ENCODE measurements at regions of chr21 and their contacts with region 1.

Region 1: DNA sequence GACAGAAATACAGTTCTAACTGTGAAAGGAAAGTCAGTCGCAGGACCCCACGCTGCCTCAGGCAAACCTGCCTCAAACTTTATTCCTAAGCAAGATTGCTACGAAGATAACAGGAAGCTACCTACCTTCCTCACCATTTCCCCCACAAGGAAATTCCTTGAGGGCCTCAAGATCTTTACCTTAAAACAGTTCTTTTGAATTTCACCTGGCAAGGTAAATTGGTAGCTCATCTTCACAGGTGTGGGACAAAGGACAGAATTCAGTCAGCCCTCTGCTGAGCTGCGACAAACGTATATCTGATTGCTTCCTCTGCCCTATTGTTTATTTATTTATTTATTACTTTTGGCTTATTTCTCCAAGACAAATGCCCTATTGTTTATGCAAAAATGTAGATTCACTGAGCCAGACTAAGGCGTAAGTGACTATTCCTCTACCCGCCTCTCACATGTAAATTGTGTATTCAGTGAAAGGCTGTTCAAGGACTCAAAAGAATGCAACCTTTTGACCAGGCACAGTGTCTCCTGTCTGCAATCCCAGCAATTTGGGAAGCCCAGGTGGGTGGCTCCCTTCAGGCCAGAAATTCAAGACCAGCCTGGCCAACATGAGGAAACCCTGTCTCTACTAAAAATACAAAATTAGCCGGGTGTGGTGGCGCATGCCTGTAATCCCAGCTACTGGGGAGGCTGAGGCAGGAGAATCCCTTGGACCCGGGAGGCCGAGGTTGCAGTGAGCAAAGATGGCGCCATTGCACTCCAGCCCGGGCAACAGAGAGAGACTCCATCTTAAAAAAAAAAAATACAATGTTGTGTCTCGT is 17.3 kb upstream of the PKNOX1 start:
- DNase-seq: no peak
- ATAC-seq: peak; percentile 84 to 100
- H3K4me3 ChIP-seq: no peak overlapping the region
- H3K27ac ChIP-seq: no peak overlapping the region
- H3K4me1 ChIP-seq: no peaks in the 10 kb centered on the region
- H3K27me3 ChIP-seq: no peaks in the 10 kb centered on the region

Region 2: DNA sequence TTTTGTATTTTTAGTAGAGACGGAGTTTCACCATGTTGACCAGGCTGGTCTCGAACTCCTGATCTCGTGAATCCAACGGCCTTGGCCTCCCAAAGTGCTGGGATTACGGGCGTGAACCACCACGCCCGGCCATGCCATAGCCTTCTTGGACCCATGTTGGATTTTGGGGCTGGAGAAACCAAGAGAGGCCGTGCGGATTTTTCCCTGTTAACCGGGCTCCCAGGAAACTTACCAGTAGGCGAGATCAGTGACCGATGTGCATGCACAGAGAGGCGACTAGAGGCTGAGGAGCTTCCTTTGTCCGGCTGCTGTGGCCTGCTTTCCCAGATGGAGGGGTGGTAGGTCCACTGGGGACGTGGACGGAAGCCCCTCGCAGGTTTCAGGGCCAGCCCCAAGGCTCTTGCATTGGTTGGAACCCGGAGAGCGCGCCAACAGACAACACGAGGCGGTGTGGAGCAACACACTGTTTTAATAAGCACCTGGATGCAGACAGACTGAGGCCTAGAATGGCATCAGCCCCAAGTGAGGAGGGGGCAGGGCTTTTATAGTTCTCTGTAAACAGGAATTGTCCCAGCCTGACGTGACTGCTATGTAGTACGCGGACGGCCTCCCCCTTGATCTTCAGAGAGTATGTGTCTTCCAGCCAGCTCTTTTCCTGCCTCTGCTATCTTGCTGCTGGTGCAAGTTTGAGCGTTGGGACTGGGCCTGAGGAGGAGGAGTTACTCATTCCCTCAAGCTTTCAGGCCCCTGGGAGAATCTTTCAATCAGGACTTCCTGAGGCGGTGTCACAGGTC is 31.7 kb before region 1 on chr21 and contains the start of gene ERVH48-1:
- intact Hi-C with region 1: no loop called
- DNase-seq: no peak
- ATAC-seq: peak in 1 of 2 donors; percentile 19
- H3K4me3 ChIP-seq: no peak within 1 kb of the TSS
- H3K27ac ChIP-seq: no peak within 1 kb of the TSS
- H3K4me1 ChIP-seq: no peaks in the 10 kb centered on the region
- H3K27me3 ChIP-seq: no peaks in the 10 kb centered on the region
- total RNA-seq, gene ERVH48-1: not detected

Region 3: DNA sequence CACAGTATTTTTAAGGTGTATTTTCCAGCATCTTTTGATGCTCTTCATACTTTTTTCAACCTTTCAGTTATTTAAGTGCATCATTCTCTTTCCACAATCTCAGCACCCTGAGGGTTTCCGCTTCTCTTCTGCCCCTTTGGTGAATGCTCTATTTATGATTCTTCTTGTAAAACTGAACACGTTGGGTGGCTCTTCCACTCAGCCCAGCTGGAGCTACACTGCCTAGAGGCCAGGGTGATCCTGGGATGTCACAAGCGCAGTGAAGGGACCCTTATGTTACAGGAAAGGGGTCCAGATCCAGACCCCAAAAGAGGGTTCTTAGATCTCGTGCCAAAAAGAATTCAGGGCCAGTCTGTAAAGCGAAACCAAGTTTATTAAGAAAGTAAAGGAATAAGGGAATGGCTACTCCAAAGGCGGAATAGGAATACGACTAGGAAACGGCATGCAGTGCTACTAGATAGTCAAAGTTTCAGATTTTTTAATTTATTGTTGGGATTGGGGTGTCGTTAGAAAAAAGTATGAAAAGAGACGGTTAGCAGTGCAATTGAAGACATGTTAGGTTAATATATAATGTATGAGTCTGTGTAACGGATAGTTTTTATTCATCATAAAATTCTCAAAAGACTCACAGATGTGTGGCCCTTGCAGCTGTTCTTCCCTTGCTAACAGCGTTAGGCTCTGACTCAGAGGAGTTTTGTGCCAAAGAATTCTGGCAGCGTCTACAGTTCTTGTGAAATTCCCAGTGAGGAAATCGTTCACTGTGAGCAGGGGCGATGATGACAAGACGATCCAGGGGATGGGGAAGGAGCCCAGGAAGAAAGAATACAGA is 17.2 kb before region 1 on chr21:
- intact Hi-C with region 1: loop called in 1 of 4 experiments (anchors 2 kb)
- DNase-seq: peak; percentile 71 to 79 (median 76)
- ATAC-seq: peak; percentile 96 to 98
- H3K4me3 ChIP-seq: no peak overlapping the region
- H3K27ac ChIP-seq: peak overlapping the region; percentile 44
- H3K4me1 ChIP-seq: no peaks in the 10 kb centered on the region
- H3K27me3 ChIP-seq: no peaks in the 10 kb centered on the region

Measured in right cardiac atrium (tissue), 5 donors.